Calu3 (cell line): ENCODE measurements at regions of chr17 and their contacts with region 1.

Region 1: DNA sequence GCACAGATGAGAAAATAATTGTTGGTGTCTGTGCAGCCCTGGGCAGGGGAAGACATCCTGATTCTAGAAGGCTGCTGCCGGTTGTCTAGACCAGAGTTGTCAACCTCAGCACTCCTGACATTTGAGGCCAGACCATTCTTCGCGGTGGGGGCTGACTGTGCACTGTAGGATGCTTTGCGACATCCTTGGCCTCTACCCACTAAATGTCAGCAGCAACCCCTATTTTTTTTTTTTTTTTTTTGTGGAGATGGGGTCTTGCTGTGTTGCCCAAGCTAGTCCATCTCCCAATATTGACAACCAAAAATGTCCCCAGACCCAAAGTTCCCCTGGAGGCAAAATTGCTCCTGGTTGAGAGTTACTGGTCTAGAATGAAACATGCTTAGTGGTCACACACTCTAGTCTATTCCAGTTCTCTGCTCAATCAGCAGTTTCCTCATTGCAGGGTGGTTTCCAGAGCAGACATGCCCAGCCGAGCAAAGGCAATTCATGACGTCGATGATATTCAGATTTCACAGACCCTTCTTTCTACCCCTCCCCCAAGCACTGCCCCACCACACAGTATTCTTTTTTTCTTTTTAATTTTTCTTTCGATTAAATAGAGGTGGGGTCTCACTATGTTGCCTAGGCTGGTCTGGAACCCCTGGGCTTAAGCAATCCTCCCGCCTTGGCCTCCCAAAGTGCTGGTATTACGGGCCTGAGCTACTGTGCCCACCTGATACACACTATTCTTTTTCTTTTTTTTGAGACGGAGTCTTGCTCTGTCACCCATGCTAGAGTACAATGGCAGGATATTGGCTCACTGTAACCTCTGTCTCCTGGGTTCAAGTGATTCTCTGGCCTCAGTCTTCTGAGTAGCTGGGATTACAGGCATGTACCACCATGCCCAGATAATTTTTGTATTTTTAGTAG is 9.0 kb downstream of the C17orf99 start:
- DNase-seq: no peak
- H3K4me3 Mint-ChIP-seq: no peak overlapping the region
- H3K27ac Mint-ChIP-seq: no peak overlapping the region
- H3K4me1 Mint-ChIP-seq: peaks cover 17% of the 10 kb centered on the region
- H3K27me3 Mint-ChIP-seq: no peaks in the 10 kb centered on the region
- CTCF ChIP-seq: no peak

Region 2: GRCh38 chr17:78168903-78169793 is 14.0 kb after region 1 on chr17:
- CTCF ChIA-PET with region 1: interaction called, 10 read pairs
- intact Hi-C with region 1: no loop called
- DNase-seq: peak; percentile 76
- H3K4me3 Mint-ChIP-seq: peak overlapping the region; percentile 70
- H3K27ac Mint-ChIP-seq: peak overlapping the region; percentile 36
- H3K4me1 Mint-ChIP-seq: peaks cover 29% of the 10 kb centered on the region
- H3K27me3 Mint-ChIP-seq: no peaks in the 10 kb centered on the region
- CTCF ChIP-seq: no peak

Region 3: DNA sequence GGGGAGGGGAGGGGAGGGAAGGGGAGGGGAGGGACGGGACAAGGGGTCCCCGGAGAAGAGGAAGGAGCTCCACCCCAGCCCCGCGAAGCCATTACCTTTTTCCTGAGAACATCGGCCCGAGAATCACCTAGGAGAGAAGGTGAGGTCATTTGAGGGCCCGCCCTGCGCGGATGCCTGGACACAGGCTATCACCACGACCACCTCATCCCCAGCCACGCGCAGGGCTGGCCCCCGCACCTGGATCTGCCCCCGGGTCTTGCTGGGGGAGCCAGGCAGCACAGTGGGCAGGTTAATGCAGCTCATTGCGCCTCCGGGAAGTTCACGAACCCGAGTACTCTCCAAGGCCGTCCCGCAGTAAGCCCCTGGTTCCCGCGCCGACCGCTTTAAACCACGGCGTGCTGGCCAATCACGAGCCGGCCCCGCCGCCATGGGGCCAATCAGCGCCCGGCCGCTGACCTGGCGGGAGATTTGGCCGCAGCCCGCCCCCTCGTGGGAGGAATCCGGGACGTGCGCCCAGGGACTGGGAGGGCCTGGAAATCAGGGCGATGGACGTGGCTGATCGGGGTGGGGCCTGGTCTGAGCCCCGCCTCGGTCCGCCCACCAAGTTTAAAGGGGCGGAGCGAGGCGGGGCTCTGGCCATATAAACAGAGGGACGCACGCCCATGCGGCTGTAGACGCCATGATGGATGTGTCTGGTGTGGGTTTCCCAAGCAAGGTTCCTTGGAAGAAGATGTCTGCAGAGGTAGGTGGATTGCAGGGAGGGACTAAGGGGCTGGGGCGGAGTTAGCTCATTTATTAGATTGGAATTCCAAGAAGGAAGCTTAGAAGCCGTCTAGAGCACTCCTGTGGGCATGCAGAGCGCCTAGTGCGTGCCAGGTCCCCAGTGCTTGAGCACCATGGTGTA is 31.8 kb after region 1 on chr17 and contains the starts of genes AFMID and TK1:
- CTCF ChIA-PET with region 1: no interaction called
- intact Hi-C with region 1: no loop called
- DNase-seq: peak; percentile 99
- H3K4me3 Mint-ChIP-seq: peak within 1 kb of the TSS; percentile 78
- H3K27ac Mint-ChIP-seq: peak within 1 kb of the TSS; percentile 66
- H3K4me1 Mint-ChIP-seq: peaks cover 23% of the 10 kb centered on the region
- H3K27me3 Mint-ChIP-seq: no peaks in the 10 kb centered on the region
- CTCF ChIP-seq: peak; percentile 76
- total RNA-seq, gene AFMID: 28.5 and 30.8 TPM in 2 replicates
- total RNA-seq, gene TK1: 89.7 and 95.3 TPM in 2 replicates